Endothelial cell of umbilical vein (primary cell): ENCODE measurements at regions of chr2 and their contacts with region 1.

Region 1: DNA sequence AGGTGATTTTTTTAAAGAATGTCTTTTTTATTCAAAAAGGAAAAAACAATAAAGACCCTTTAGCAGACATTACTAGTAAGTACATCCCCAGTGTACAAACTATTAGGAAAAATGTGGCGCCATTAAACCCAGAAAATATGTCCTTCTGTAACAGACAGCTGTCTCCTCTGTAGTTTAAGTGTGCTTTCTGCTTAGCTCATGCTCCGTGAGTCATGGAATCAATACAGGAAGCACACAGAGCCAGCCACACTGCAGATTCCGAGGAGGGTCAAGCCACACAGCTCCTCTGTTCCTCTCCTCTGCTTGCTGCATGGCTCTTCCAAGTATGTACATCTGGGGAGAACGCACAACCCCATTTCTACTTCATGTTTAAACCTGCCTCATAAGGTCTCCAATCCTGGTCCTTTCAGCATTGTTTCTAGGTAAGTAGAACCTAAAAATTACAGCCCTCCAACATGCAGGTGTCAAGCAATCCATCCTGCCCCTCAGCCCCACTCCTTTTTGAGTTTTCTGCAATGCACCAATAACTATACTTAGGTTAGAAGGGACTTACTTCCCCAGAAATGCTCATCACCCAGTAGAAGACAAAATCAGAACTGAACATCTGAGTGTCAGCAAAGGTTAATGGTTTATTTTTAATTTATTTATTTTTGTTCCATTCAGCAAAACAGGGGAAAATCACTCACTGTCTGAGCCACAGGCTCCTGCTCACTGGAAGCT is 37.5 kb downstream of the ACVR1 start:
- DNase-seq: peak; percentile 91
- H3K4me3 ChIP-seq: peak overlapping the region in 1 of 3 experiments; percentile 73
- H3K27ac ChIP-seq: peak overlapping the region; percentile 99
- H3K4me1 ChIP-seq: peaks cover 37% of the 10 kb centered on the region
- H3K27me3 ChIP-seq: no peaks in the 10 kb centered on the region
- CTCF ChIP-seq: no peak
- POLR2A ChIP-seq: peak; percentile 1

Region 2: DNA sequence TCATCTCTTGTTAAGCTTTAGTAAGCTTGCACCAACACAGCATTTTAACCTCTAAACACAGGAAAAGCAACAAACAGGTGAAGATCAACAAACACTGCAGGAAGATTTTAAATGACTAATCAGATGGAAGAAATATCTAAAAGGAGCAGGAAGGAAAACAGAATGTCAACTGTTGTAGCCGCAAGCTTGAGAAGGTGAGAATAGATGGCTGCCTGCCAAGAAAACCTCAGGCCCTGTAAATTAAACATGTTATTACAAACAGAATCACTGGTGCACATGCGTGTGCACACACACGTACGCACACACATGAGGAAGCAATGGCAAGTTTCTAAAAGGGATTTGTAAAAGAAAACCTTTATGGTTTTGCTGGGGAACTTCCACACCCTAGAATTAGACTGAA is 838.9 kb before region 1 on chr2:
- CTCF ChIA-PET with region 1: no interaction called
- POLR2A ChIA-PET with region 1: no interaction called
- dilution Hi-C with region 1: no loop called
- intact Hi-C with region 1: no loop called
- DNase-seq: no peak
- H3K4me3 ChIP-seq: no peak overlapping the region
- H3K27ac ChIP-seq: no peak overlapping the region
- H3K4me1 ChIP-seq: no peaks in the 10 kb centered on the region
- H3K27me3 ChIP-seq: peaks cover 0 to 3% of the 10 kb centered on the region in 2 experiments
- CTCF ChIP-seq: no peak
- POLR2A ChIP-seq: no peak

Region 3: GRCh38 chr2:157784169-157784822 is 54.3 kb before region 1 on chr2:
- CTCF ChIA-PET with region 1: interaction called, 4 read pairs
- POLR2A ChIA-PET with region 1: interaction called, 4 read pairs
- dilution Hi-C with region 1: no loop called
- intact Hi-C with region 1: loop called (anchors 2 kb)
- DNase-seq: peak; percentile 82
- H3K4me3 ChIP-seq: no peak overlapping the region
- H3K27ac ChIP-seq: peak overlapping the region; percentile 44
- H3K4me1 ChIP-seq: peaks cover 40% of the 10 kb centered on the region
- H3K27me3 ChIP-seq: no peaks in the 10 kb centered on the region
- CTCF ChIP-seq: no peak
- POLR2A ChIP-seq: no peak

Region 4: DNA sequence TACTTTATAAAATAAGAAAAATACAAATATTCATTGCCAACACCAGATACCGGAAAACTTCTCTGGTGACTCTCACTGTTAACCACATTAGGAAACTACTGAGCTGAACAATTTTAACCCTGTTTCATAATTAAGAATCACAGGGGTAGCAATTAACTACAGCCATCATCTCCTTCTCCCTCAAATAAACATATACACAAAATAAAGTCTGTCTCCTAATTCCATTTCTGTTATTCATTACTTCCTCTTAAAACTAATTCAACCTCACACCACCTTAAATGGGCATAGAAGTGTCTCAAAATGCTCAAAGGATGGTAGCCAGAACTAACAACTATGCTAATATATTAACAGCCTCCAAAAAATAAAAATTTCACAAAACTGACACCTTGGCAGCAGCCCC is 23.2 kb before region 1 on chr2:
- CTCF ChIA-PET with region 1: no interaction called
- POLR2A ChIA-PET with region 1: no interaction called
- dilution Hi-C with region 1: no loop called
- intact Hi-C with region 1: no loop called
- DNase-seq: peak; percentile 25
- H3K4me3 ChIP-seq: no peak overlapping the region
- H3K27ac ChIP-seq: no peak overlapping the region
- H3K4me1 ChIP-seq: peaks cover 26% of the 10 kb centered on the region
- H3K27me3 ChIP-seq: no peaks in the 10 kb centered on the region
- CTCF ChIP-seq: no peak
- POLR2A ChIP-seq: no peak

Region 5: DNA sequence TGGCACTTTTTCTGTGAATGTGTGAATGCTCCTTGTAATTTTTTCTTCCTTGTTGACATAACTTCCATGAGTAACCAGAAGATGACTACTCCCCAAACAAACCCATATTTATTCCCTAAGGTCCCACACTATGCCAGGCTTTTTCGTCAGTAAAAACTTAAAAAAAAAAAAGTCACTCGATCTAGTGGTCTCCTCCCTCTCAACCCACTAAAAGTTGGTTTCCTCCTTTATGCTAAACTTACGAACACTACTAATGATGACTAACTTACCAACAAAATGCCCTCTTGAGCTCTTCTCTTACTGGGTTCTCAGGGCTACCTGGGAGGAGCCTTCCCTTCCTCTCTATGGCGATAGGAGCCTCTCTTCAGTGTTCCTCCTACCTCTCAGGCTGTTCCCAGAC is 19.3 kb after region 1 on chr2:
- CTCF ChIA-PET with region 1: interaction called, 5 read pairs
- POLR2A ChIA-PET with region 1: interaction called, 5 read pairs
- dilution Hi-C with region 1: no loop called
- intact Hi-C with region 1: loop called (anchors 2 kb)
- DNase-seq: no peak
- H3K4me3 ChIP-seq: no peak overlapping the region
- H3K27ac ChIP-seq: no peak overlapping the region
- H3K4me1 ChIP-seq: peaks cover 18% of the 10 kb centered on the region
- H3K27me3 ChIP-seq: no peaks in the 10 kb centered on the region
- CTCF ChIP-seq: no peak
- POLR2A ChIP-seq: no peak